ENCODE measurements at regions of chr22 and their contacts with region 1.

Region 1: GRCh38 chr22:22877523-22878210 is 9.9 kb upstream of the IGLL5 start:
- DNase-seq: peak; percentile 43 to 80 (median 72)
- ATAC-seq: peak; percentile 67
- H3K4me3 ChIP-seq: no peak overlapping the region
- H3K4me3 Mint-ChIP-seq: no peak overlapping the region
- H3K27ac ChIP-seq: no peak overlapping the region
- H3K27ac Mint-ChIP-seq: peak overlapping the region in 3 of 9 donors; percentile 36 to 42 (median 40)
- H3K4me1 ChIP-seq: no peaks in the 10 kb centered on the region
- H3K4me1 Mint-ChIP-seq: peaks cover 0 to 4% (median 3%) of the 10 kb centered on the region in 7 donors
- H3K27me3 ChIP-seq: no peaks in the 10 kb centered on the region
- H3K27me3 Mint-ChIP-seq: peaks cover 0 to 48% (median 0%) of the 10 kb centered on the region in 5 donors

Region 2: GRCh38 chr22:22009661-22010060 is 868.0 kb before region 1 on chr22:
- CTCF ChIA-PET with region 1: no interaction called
- POLR2A ChIA-PET with region 1: no interaction called
- intact Hi-C with region 1: no loop called
- DNase-seq: no peak
- ATAC-seq: no peak
- H3K4me3 ChIP-seq: no peak overlapping the region
- H3K4me3 Mint-ChIP-seq: no peak overlapping the region
- H3K27ac ChIP-seq: no peak overlapping the region
- H3K27ac Mint-ChIP-seq: no peak overlapping the region
- H3K4me1 ChIP-seq: no peaks in the 10 kb centered on the region
- H3K4me1 Mint-ChIP-seq: peaks cover 0 to 5% (median 0%) of the 10 kb centered on the region in 7 donors
- H3K27me3 ChIP-seq: no peaks in the 10 kb centered on the region
- H3K27me3 Mint-ChIP-seq: peaks cover 15 to 35% (median 26%) of the 10 kb centered on the region in 5 donors

Region 3: GRCh38 chr22:22787786-22788459 is 89.7 kb before region 1 on chr22:
- CTCF ChIA-PET with region 1: interaction called, 155 read pairs
- POLR2A ChIA-PET with region 1: no interaction called
- intact Hi-C with region 1: loop called (anchors 1 to 2 kb)
- DNase-seq: peak; percentile 33 to 72 (median 61)
- ATAC-seq: peak; percentile 82
- H3K4me3 ChIP-seq: no peak overlapping the region
- H3K4me3 Mint-ChIP-seq: peak overlapping the region in 1 of 10 donors; percentile 44
- H3K27ac ChIP-seq: no peak overlapping the region
- H3K27ac Mint-ChIP-seq: peak overlapping the region in 4 of 9 donors; percentile 8 to 48 (median 26)
- H3K4me1 ChIP-seq: peaks cover 10 to 56% of the 10 kb centered on the region in 2 donors
- H3K4me1 Mint-ChIP-seq: peaks cover 12 to 44% (median 26%) of the 10 kb centered on the region in 7 donors
- H3K27me3 ChIP-seq: no peaks in the 10 kb centered on the region
- H3K27me3 Mint-ChIP-seq: peaks cover 0 to 13% (median 0%) of the 10 kb centered on the region in 5 donors

Region 4: DNA sequence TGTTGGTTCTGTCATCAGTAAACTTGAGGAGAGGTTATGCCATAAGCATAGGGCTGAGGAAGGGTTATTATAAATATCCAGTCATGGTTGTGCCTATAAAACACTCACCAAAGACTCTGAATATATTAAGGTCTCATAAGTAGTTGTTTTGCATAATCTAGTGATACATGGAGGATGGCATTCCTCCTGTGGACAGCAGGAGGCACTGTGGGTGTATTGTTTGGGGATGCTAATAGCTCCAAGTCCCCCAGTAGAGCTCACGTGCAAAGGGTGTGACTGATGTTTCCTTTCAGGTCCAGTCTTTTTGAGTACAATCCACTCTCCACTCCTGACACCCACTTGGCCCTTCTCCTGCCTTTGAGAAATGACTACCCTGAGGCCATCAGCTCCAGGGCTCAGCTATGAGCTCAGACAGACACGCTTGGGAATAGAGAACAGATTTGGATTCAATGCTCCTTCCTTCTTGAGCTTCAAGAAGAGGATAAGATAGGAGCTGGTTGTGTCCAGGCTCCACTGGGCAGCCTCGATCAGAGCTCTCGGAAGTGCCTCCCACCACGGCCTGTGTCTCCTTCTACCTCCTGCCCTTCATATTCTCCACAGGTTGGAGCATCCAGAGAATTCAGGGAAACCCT is 75.2 kb before region 1 on chr22:
- CTCF ChIA-PET with region 1: interaction called, 322 read pairs
- POLR2A ChIA-PET with region 1: interaction called, 4 read pairs
- intact Hi-C with region 1: loop called in 1 of 2 experiments (anchors 1 kb)
- DNase-seq: peak in 5 of 9 donors; percentile 26 to 53 (median 34)
- ATAC-seq: peak; percentile 79
- H3K4me3 ChIP-seq: no peak overlapping the region
- H3K4me3 Mint-ChIP-seq: no peak overlapping the region
- H3K27ac ChIP-seq: no peak overlapping the region
- H3K27ac Mint-ChIP-seq: peak overlapping the region in 1 of 9 donors; percentile 10
- H3K4me1 ChIP-seq: peaks cover 0 to 41% of the 10 kb centered on the region in 2 donors
- H3K4me1 Mint-ChIP-seq: peaks cover 0 to 29% (median 16%) of the 10 kb centered on the region in 7 donors
- H3K27me3 ChIP-seq: no peaks in the 10 kb centered on the region
- H3K27me3 Mint-ChIP-seq: peaks cover 0 to 51% (median 0%) of the 10 kb centered on the region in 5 donors

Region 5: GRCh38 chr22:22848364-22848866 is 29.3 kb before region 1 on chr22:
- CTCF ChIA-PET with region 1: interaction called, 94 read pairs
- POLR2A ChIA-PET with region 1: interaction called, 6 read pairs
- intact Hi-C with region 1: loop called (anchors 1 to 2 kb)
- DNase-seq: peak; percentile 35 to 75 (median 52)
- ATAC-seq: peak; percentile 83
- H3K4me3 ChIP-seq: no peak overlapping the region
- H3K4me3 Mint-ChIP-seq: no peak overlapping the region
- H3K27ac ChIP-seq: no peak overlapping the region
- H3K27ac Mint-ChIP-seq: peak overlapping the region in 3 of 9 donors; percentile 22 to 79 (median 52)
- H3K4me1 ChIP-seq: peaks cover 26 to 30% of the 10 kb centered on the region in 2 donors
- H3K4me1 Mint-ChIP-seq: peaks cover 8 to 57% (median 48%) of the 10 kb centered on the region in 7 donors
- H3K27me3 ChIP-seq: no peaks in the 10 kb centered on the region
- H3K27me3 Mint-ChIP-seq: peaks cover 0 to 59% (median 0%) of the 10 kb centered on the region in 5 donors

Region 6: DNA sequence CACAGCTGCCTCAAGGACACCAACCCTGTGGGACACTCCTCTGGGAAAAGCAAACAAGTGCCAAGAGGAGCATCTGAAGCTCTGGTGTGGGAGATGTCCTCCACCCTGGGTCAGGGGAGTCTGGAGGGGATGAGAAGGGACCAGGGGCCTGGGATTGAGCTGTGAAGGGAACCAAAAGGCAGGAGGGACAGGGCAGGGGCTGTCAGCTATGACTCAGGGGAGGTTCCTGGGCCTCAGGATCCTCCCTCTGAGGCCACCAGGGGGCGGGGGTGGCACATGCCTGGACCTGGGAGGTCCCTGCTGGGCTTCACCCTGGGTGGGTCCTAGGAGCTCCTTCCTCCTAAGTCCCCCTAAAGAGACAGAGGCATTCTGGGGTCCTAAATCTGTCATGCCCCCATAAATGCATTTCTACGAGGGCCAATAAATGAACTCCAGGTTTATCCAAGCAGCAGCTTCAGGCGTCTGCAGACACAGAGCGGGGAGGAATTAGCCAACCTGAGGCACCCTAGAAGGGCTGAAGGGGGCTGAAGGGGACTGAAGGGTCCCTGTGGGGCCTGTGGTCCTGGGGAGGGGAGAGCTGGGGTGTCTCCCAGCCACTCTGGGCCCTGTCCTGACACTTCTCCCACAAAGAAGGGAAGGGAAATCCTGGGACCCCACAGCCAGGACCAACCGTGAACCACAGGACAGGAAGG is 21.9 kb before region 1 on chr22:
- CTCF ChIA-PET with region 1: interaction called, 94 read pairs
- POLR2A ChIA-PET with region 1: interaction called, 5 read pairs
- intact Hi-C with region 1: loop called in 1 of 2 experiments (anchors 1 kb)
- DNase-seq: peak in 6 of 9 donors; percentile 6 to 55 (median 20)
- ATAC-seq: peak; percentile 63
- H3K4me3 ChIP-seq: no peak overlapping the region
- H3K4me3 Mint-ChIP-seq: no peak overlapping the region
- H3K27ac ChIP-seq: no peak overlapping the region
- H3K27ac Mint-ChIP-seq: no peak overlapping the region
- H3K4me1 ChIP-seq: peaks cover 0 to 4% of the 10 kb centered on the region in 2 donors
- H3K4me1 Mint-ChIP-seq: peaks cover 0 to 5% (median 0%) of the 10 kb centered on the region in 7 donors
- H3K27me3 ChIP-seq: no peaks in the 10 kb centered on the region
- H3K27me3 Mint-ChIP-seq: peaks cover 0 to 58% (median 0%) of the 10 kb centered on the region in 5 donors

Measured in naive thymus-derived CD4-positive, alpha-beta T cell (primary cell).